ENCODE measurements at regions of chr9 and their contacts with region 1.

Region 1: GRCh38 chr9:35705836-35706430 is 16.2 kb upstream of the TPM2 start:
- DNase-seq: no peak
- H3K4me3 ChIP-seq: no peak overlapping the region
- H3K27ac ChIP-seq: no peak overlapping the region
- H3K4me1 ChIP-seq: no peaks in the 10 kb centered on the region
- H3K27me3 ChIP-seq: no peaks in the 10 kb centered on the region
- CTCF ChIP-seq: no peak
- EP300 ChIP-seq: no peak
- POLR2A ChIP-seq: no peak
- RAD21 ChIP-seq: no peak

Region 2: GRCh38 chr9:35664531-35665470 is 41.1 kb before region 1 on chr9 and contains the start of gene ARHGEF39:
- CTCF ChIA-PET with region 1: interaction called, 90 read pairs
- POLR2A ChIA-PET with region 1: interaction called, 3 read pairs
- DNase-seq: peak; percentile 81 to 92
- H3K4me3 ChIP-seq: peak within 1 kb of the TSS; percentile 50 to 84 (median 78)
- H3K27ac ChIP-seq: 0 out of 2 replicates have a peak within 1 kb of the TSS, but pooled peaks have one; percentile 56
- H3K4me1 ChIP-seq: peaks cover 0 to 5% (median 1%) of the 10 kb centered on the region in 4 experiments; a peak in 5 of 7 replicates
- H3K27me3 ChIP-seq: no peaks in the 10 kb centered on the region
- CTCF ChIP-seq: peak; percentile 58 to 65 (median 60); a peak in 3 of 4 replicates
- EP300 ChIP-seq: no peak
- POLR2A ChIP-seq: peak in 1 of 2 experiments; percentile 75; a peak in 2 of 3 replicates
- RAD21 ChIP-seq: peak; percentile 41 to 44
- total RNA-seq, gene ARHGEF39: 17.5 and 18.6 TPM in 2 replicates

Region 3: DNA sequence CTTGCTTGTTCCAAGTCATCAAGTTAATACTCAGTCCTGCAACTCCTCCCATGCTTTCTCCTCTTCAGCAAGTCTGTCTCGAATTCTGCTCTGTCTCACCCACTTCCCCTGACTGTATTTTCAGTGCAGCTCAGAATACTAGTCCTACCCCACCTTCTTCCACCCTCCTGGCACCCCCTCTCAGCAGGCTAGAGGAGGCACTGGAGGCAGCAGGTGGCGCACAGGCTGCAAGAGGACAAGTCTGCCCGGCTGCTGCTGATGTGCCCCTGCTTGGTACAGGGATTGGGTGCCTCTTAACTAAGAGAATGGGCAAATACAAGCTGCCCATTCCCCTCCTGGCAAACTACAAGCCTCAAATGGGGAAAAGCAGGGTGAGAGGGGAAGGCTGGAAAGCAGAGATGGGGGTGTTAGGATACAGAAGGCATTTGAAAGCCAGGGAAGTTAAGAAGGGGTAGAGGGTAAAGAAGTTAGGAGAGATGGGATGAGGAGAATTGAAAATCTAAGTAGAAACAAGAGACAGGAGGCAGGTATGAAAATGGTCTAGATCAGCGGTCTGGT is 21.0 kb after region 1 on chr9:
- CTCF ChIA-PET with region 1: interaction called, 198 read pairs
- POLR2A ChIA-PET with region 1: interaction called, 158 read pairs
- DNase-seq: no peak
- H3K4me3 ChIP-seq: no peak overlapping the region
- H3K27ac ChIP-seq: 0 out of 2 replicates have a peak overlapping the region, but pooled peaks have one; percentile 33
- H3K4me1 ChIP-seq: peaks cover 21 to 42% (median 30%) of the 10 kb centered on the region in 4 experiments
- H3K27me3 ChIP-seq: no peaks in the 10 kb centered on the region
- CTCF ChIP-seq: peak in 1 of 3 experiments; percentile 2; a peak in 1 of 4 replicates
- EP300 ChIP-seq: no peak
- POLR2A ChIP-seq: no peak
- RAD21 ChIP-seq: no peak

Region 4: DNA sequence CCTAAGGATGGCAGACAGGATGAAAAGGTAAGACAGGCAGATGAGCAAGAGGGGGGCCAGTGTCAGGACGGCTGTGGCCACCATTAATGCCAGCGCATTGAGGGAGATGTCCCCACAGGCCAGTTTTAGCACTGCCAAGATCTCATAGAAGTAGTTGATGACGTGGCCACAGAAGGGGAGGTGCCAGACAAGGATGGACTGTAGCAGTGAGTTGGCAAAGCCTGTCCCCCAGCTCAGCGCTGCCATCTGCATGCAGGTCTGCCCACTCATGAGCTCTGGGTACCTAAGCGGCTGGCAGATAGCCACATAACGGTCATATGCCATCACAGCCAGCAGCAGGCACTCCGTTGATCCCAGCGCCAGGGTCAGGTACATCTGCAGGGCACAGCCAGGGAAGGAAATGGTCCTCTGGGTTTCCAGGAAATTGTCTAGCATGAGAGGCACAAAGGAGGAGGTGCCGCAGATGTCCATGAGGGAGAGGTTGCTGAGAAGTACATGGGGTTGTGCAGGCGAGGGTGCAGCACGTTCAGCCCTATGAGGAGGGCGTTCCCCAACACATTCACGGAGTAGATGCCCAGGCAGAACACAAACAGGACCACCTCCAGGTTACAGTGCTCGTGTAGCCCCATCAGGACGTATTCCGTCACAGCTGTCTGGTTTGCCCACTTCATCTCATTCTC is 153.5 kb after region 1 on chr9:
- CTCF ChIA-PET with region 1: no interaction called
- POLR2A ChIA-PET with region 1: no interaction called
- DNase-seq: peak in 1 of 2 experiments; percentile 43
- H3K4me3 ChIP-seq: no peak overlapping the region
- H3K27ac ChIP-seq: no peak overlapping the region
- H3K4me1 ChIP-seq: no peaks in the 10 kb centered on the region
- H3K27me3 ChIP-seq: no peaks in the 10 kb centered on the region; a peak in 1 of 7 replicates
- CTCF ChIP-seq: peak in 2 of 3 experiments; percentile 4; a peak in 2 of 4 replicates
- EP300 ChIP-seq: no peak
- POLR2A ChIP-seq: no peak
- RAD21 ChIP-seq: peak; percentile 7 to 13; a peak in 1 of 4 replicates

Measured in H1 (cell line).